A549 (cell line): ENCODE measurements at regions of chr14 and their contacts with region 1.

Region 1: GRCh38 chr14:64303471-64303917 is 9.3 kb upstream of the ESR2 start:
- DNase-seq: peak; percentile 64 to 82
- ATAC-seq: peak; percentile 87 to 89
- H3K4me3 ChIP-seq: no peak overlapping the region
- H3K27ac ChIP-seq: no peak overlapping the region
- H3K4me1 ChIP-seq: no peaks in the 10 kb centered on the region
- CTCF ChIP-seq: peak; percentile 86
- EP300 ChIP-seq: no peak
- POLR2A ChIP-seq: no peak
- RAD21 ChIP-seq: peak; percentile 83 to 86

Region 2: GRCh38 chr14:63388763-63389431 is 914.6 kb before region 1 on chr14:
- CTCF ChIA-PET with region 1: interaction called, 12 read pairs
- POLR2A ChIA-PET with region 1: no interaction called
- DNase-seq: peak; percentile 20 to 65
- ATAC-seq: peak; percentile 94 to 98
- H3K4me3 ChIP-seq: no peak overlapping the region
- H3K27ac ChIP-seq: no peak overlapping the region
- H3K4me1 ChIP-seq: no peaks in the 10 kb centered on the region
- CTCF ChIP-seq: peak; percentile 86
- EP300 ChIP-seq: no peak
- POLR2A ChIP-seq: no peak
- RAD21 ChIP-seq: peak; percentile 91 to 92

Region 3: DNA sequence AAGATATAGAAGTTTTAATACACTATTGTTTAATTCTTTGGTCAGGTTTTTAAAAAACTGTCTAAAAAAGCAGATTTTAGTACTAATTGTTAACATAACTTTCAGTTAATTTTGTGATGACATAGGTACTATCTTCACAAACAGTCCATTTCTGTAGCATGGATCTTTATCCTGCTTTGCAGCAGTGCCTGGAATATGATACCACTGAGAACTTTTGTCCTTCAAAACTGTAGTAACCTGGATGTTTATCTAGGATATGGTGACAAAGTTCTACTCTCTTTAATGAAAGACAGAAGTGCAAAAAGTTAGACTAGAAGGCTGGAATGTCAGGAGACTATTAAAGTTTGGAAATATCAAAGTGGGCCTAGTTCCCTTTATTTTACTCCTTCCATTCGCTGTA is 290.8 kb before region 1 on chr14:
- CTCF ChIA-PET with region 1: interaction called, 99 read pairs
- POLR2A ChIA-PET with region 1: no interaction called
- DNase-seq: no peak
- ATAC-seq: no peak
- H3K4me3 ChIP-seq: no peak overlapping the region
- H3K27ac ChIP-seq: no peak overlapping the region
- H3K4me1 ChIP-seq: no peaks in the 10 kb centered on the region
- CTCF ChIP-seq: no peak
- EP300 ChIP-seq: no peak
- POLR2A ChIP-seq: no peak
- RAD21 ChIP-seq: no peak

Region 4: GRCh38 chr14:64040044-64040443 is 263.4 kb before region 1 on chr14:
- CTCF ChIA-PET with region 1: interaction called, 15 read pairs
- POLR2A ChIA-PET with region 1: no interaction called
- DNase-seq: peak in 1 of 2 experiments; percentile 13
- ATAC-seq: no peak
- H3K4me3 ChIP-seq: no peak overlapping the region
- H3K27ac ChIP-seq: no peak overlapping the region
- H3K4me1 ChIP-seq: no peaks in the 10 kb centered on the region
- CTCF ChIP-seq: peak; percentile 32; the same call in 2 of the 3 replicates
- EP300 ChIP-seq: no peak
- POLR2A ChIP-seq: no peak
- RAD21 ChIP-seq: peak; percentile 50 to 51; a peak in 3 of 5 replicates

Region 5: GRCh38 chr14:64266239-64266638 is 37.3 kb before region 1 on chr14:
- CTCF ChIA-PET with region 1: interaction called, 11 read pairs
- POLR2A ChIA-PET with region 1: no interaction called
- DNase-seq: no peak
- ATAC-seq: peak; percentile 45 to 71; a peak in 3 of 6 replicates
- H3K4me3 ChIP-seq: no peak overlapping the region
- H3K27ac ChIP-seq: no peak overlapping the region
- H3K4me1 ChIP-seq: no peaks in the 10 kb centered on the region
- CTCF ChIP-seq: no peak
- EP300 ChIP-seq: no peak
- POLR2A ChIP-seq: no peak
- RAD21 ChIP-seq: no peak

Region 6: GRCh38 chr14:64324895-64325294 is 21.4 kb after region 1 on chr14:
- CTCF ChIA-PET with region 1: interaction called, 23 read pairs
- POLR2A ChIA-PET with region 1: no interaction called
- DNase-seq: no peak
- ATAC-seq: no peak
- H3K4me3 ChIP-seq: no peak overlapping the region
- H3K27ac ChIP-seq: peak overlapping the region in 1 of 2 experiments; percentile 33; a peak in 1 of 6 replicates
- H3K4me1 ChIP-seq: peaks cover 8% of the 10 kb centered on the region; the same call in 2 of the 3 replicates
- CTCF ChIP-seq: no peak
- EP300 ChIP-seq: no peak
- POLR2A ChIP-seq: no peak
- RAD21 ChIP-seq: no peak

Region 7: GRCh38 chr14:64338616-64339316 is 35.3 kb after region 1 on chr14:
- CTCF ChIA-PET with region 1: interaction called, 11 read pairs
- POLR2A ChIA-PET with region 1: no interaction called
- DNase-seq: peak; percentile 99
- ATAC-seq: peak; percentile 94
- H3K4me3 ChIP-seq: peak overlapping the region; percentile 83
- H3K27ac ChIP-seq: peak overlapping the region; percentile 94 to 95
- H3K4me1 ChIP-seq: peaks cover 17% of the 10 kb centered on the region
- CTCF ChIP-seq: no peak
- EP300 ChIP-seq: no peak
- POLR2A ChIP-seq: peak; percentile 96
- RAD21 ChIP-seq: no peak

Region 8: DNA sequence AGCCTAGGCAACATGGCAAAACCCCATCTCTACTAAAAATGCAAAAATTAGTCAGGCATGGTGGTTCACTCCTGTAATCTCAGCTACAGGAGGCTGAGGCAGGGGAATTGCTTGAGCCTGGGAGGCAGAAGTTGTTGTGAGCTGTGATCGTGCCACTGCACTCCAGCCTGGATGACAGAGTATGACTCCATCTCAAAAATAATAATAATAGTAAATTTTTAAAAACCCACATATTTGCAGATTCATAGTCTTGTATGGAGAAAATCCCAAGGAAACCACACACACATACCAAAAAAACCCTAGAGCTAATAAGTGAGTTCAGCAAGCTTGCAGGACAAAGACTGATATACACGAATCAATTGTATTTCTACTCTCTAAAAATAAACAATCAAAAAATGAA is 65.7 kb after region 1 on chr14:
- CTCF ChIA-PET with region 1: no interaction called
- POLR2A ChIA-PET with region 1: no interaction called
- DNase-seq: no peak
- ATAC-seq: no peak
- H3K4me3 ChIP-seq: no peak overlapping the region
- H3K27ac ChIP-seq: no peak overlapping the region
- H3K4me1 ChIP-seq: no peaks in the 10 kb centered on the region
- CTCF ChIP-seq: no peak
- EP300 ChIP-seq: no peak
- POLR2A ChIP-seq: no peak
- RAD21 ChIP-seq: no peak